Heart left ventricle (tissue), 16 donors: ENCODE measurements at regions of chr16 and their contacts with region 1.

Region 1: DNA sequence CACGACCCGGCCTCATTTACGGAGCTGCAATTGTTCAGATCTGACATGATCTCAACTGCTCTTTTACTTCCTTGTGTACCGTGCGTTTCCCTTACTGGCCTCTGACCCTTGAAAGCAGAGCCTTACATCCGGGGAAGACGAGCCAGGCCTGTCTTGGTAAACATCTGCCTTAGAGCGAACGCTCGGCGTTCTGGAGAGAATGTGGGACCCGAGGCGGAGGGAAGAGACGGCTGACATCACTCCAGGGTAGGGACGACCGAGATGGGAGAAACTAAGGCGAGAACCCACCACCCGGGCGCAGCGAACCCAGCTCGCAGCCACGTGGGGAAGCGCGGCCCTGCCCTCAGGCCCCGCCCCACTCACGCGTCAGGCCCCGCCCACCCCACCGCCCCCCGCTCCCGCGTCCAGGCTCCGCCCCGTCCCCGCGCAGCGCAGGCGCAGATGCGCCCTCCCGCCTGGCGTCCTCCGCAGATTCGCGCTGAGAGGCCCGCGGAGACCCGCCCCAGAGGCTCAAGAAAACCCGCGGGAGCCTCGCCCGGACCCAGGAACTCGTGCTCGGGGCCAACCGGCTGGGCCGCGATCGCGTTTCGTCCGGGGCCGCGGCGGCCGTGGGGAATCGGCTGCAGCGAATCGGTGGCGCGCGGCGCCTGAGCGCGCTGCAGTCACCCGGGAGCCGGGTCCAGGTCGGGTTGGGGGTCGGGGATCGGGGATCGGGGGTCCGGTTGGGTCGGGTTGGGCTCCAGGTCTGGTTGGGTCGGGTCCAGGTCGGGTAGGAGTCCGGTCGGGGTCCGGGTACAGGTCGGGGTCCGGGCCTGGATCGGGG is at the start of gene TELO2:
- DNase-seq: peak; percentile 80 to 93 (median 85)
- ATAC-seq: peak; percentile 69 to 93 (median 90)
- H3K4me3 ChIP-seq: peak within 1 kb of the TSS; percentile 59 to 92 (median 76)
- H3K27ac ChIP-seq: peak within 1 kb of the TSS; percentile 75 to 98 (median 88)
- H3K4me1 ChIP-seq: peaks cover 0 to 31% (median 24%) of the 10 kb centered on the region in 12 donors
- H3K27me3 ChIP-seq: no peaks in the 10 kb centered on the region
- CTCF ChIP-seq: no peak
- POLR2A ChIP-seq: peak in 1 of 2 donors; percentile 20
- total RNA-seq, gene TELO2: 11.8 to 29.6 (median 16.7) TPM

Region 2: DNA sequence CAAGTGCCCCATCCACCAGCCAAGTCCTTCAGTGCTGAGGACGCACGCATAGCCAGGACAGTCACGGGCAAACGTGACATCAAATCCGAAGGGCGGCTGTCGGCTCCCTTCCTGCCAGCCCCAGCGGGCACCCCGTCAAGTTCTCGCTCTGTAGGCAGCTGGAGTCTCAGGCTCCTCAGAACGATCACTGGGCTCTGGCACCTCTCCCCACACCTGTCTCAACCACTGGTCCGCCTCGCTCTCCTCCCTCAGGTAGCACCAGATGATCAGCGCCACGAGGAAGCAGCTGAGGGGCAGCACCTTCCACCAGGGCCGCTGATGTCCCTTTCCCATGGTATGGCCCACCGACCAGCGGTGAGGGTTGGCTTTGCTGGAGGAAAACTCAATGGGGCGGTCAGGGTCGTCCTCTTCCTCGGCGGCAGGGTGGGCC is 73.0 kb before region 1 on chr16:
- intact Hi-C with region 1: loop called in 1 of 10 experiments (anchors 5 kb)
- DNase-seq: peak in 2 of 5 donors; percentile 39 to 45
- ATAC-seq: peak in 2 of 4 donors; percentile 1 to 2
- H3K4me3 ChIP-seq: peak overlapping the region; percentile 61 to 98 (median 88)
- H3K27ac ChIP-seq: peak overlapping the region in 11 of 12 donors; percentile 61 to 99 (median 98)
- H3K4me1 ChIP-seq: peaks cover 4 to 26% (median 18%) of the 10 kb centered on the region in 12 donors
- H3K27me3 ChIP-seq: no peaks in the 10 kb centered on the region
- CTCF ChIP-seq: no peak
- POLR2A ChIP-seq: no peak

Region 3: DNA sequence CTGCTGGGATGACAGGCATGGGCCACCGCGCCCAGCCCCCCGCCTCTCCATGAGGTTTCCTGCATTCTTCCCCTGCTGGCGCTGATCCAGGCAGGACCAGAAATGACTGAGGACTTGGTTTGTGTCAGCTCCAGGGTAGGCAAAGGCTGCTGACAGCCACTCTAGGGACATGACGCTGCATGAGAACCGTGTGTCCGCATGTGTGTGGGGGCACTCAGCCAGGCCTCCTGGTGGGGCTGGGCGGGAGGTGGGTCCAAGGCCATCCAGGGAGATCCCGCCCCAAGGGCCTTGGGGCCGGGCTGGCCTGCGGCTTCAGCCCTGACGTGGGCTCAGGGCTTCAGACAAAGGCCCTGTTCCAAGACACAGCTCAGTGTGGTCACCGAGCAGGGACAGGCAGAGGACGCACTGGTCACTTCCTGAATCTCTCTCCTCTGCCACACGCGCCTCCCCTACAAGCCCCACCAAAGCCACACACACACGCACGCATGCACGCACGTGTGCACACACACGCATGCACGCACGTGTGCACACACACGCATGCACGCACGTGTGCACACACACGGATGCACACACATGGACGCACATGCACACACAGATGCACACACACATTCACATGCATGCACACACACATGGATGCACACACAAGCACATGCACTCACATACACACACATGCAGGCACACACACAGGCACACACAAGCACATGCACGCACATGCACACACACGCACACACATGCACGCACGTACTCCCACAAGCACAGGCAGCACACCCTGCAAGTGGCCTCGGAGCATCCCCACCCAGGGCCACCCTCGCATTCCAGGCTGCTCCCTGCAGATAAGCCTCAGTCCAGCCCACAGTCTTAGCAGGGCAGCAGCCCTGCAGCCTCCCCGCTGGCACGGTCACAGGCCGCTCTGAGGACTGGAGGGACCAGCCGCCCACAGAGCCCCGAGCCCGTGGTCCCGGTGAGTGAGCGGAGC is 35.0 kb after region 1 on chr16:
- intact Hi-C with region 1: loop called in 3 of 10 experiments (anchors 5 kb)
- DNase-seq: peak; percentile 69 to 85 (median 82)
- ATAC-seq: peak; percentile 7 to 20 (median 10)
- H3K4me3 ChIP-seq: no peak overlapping the region
- H3K27ac ChIP-seq: peak overlapping the region in 11 of 12 donors; percentile 11 to 99 (median 34)
- H3K4me1 ChIP-seq: peaks cover 14 to 66% (median 55%) of the 10 kb centered on the region in 12 donors
- H3K27me3 ChIP-seq: no peaks in the 10 kb centered on the region
- CTCF ChIP-seq: no peak
- POLR2A ChIP-seq: peak in 1 of 2 donors; percentile 38

Region 4: GRCh38 chr16:1543085-1543896 is 50.2 kb after region 1 on chr16:
- intact Hi-C with region 1: loop called in 3 of 10 experiments (anchors 5 to 10 kb)
- DNase-seq: peak; percentile 83 to 91 (median 85)
- ATAC-seq: peak; percentile 26 to 75 (median 70)
- H3K4me3 ChIP-seq: peak overlapping the region in 4 of 12 donors; percentile 1 to 23 (median 12)
- H3K27ac ChIP-seq: peak overlapping the region; percentile 85 to 98 (median 95)
- H3K4me1 ChIP-seq: peaks cover 40 to 100% (median 95%) of the 10 kb centered on the region in 12 donors
- H3K27me3 ChIP-seq: no peaks in the 10 kb centered on the region
- CTCF ChIP-seq: peak in 1 of 12 donors; percentile 18
- POLR2A ChIP-seq: peak in 1 of 2 donors; percentile 28

Region 5: GRCh38 chr16:1610276-1611017 is 117.3 kb after region 1 on chr16:
- intact Hi-C with region 1: loop called in 9 of 10 experiments (anchors 1 to 10 kb)
- DNase-seq: peak; percentile 85 to 95 (median 90)
- ATAC-seq: peak; percentile 48 to 77 (median 74)
- H3K4me3 ChIP-seq: peak overlapping the region; percentile 25 to 96 (median 72)
- H3K27ac ChIP-seq: peak overlapping the region; percentile 58 to 92 (median 82)
- H3K4me1 ChIP-seq: peaks cover 5 to 46% (median 33%) of the 10 kb centered on the region in 12 donors
- H3K27me3 ChIP-seq: no peaks in the 10 kb centered on the region
- CTCF ChIP-seq: no peak
- POLR2A ChIP-seq: peak in 1 of 2 donors; percentile 27